Vagina (tissue), 2 donors: ENCODE measurements at regions of chr5 and their contacts with region 1.

Region 1: DNA sequence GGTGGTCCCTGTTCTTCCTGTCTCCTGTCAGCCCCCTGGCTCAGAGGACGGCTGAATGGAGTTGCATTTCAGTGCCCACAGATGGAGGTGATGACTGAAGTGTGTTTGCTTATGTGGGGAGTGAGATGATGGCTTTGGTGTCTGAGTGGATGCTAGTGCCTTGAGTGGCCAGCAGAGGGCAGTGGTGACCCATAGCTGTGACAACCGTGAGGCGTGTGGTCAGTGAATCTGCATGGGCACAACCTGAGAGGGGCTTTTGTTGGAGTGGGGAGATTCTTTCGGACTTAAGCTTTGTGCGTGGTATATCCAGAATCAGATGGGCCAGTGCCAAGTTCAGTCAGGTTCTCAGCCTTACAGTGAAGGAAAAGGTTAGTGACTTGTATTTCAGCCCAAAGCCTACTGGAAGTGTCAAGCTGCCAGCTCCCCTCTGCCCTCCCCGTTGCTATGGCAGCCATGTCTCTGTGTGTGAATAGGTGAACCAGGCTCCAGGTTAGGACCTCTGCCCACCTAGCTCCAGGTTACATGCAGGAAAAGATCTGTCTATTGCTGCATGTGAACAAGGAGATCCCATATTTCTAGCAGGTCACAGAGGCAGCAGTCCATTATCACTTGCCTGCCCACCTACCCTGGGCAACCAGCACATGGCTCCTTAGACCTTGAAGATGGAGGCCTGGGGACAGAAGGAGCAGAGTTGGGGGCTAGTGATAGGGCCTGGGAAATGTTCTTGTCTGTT is 14.7 kb upstream of the CXXC5 start:
- DNase-seq: peak in 1 of 2 donors; percentile 88
- H3K4me3 ChIP-seq: no peak overlapping the region
- H3K27ac ChIP-seq: no peak overlapping the region
- H3K4me1 ChIP-seq: peaks cover 31% of the 10 kb centered on the region
- H3K27me3 ChIP-seq: no peaks in the 10 kb centered on the region
- CTCF ChIP-seq: peak; percentile 93 to 98 (median 98)
- POLR2A ChIP-seq: no peak

Region 2: GRCh38 chr5:139378101-139378835 is 255.2 kb before region 1 on chr5:
- intact Hi-C with region 1: no loop called
- DNase-seq: no peak
- H3K4me3 ChIP-seq: no peak overlapping the region
- H3K27ac ChIP-seq: no peak overlapping the region
- H3K4me1 ChIP-seq: peaks cover 5% of the 10 kb centered on the region
- H3K27me3 ChIP-seq: no peaks in the 10 kb centered on the region
- CTCF ChIP-seq: no peak
- POLR2A ChIP-seq: no peak

Region 3: DNA sequence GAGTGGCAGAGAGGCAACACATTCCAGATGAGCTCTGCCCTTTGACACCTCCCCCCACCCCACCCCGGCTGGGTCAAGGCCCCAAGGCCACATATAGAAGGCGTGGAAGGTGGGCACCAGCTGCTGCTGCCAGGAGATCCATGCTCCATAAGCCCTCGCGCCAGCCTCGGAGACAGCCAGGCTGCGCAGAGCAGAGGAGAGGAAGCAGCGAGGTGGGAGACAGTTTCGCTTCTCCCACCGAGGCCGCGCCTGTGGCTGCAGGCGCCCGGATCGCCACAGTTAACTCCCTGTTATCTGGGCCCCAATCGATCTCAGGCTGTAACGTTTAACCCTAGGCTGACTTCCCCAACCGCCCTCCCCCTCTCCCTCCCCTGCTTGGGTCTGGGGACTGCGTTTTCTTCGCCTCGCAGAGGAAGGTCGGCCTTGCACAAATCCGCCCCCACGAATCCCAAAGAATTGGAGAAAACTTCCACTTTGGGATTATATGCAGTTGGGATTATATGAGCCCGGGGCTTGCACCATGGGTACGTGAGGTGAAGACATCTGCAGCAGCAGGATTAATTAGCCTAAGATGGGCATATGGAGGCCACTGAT is 13.5 kb after region 1 on chr5:
- intact Hi-C with region 1: loop called (anchors 1 kb)
- DNase-seq: no peak
- H3K4me3 ChIP-seq: peak overlapping the region; percentile 12 to 67
- H3K27ac ChIP-seq: peak overlapping the region; percentile 95
- H3K4me1 ChIP-seq: peaks cover 70% of the 10 kb centered on the region
- H3K27me3 ChIP-seq: no peaks in the 10 kb centered on the region
- CTCF ChIP-seq: no peak
- POLR2A ChIP-seq: no peak

Region 4: GRCh38 chr5:139689631-139690063 is 56.2 kb after region 1 on chr5:
- intact Hi-C with region 1: loop called (anchors 5 kb)
- DNase-seq: no peak
- H3K4me3 ChIP-seq: no peak overlapping the region
- H3K27ac ChIP-seq: peak overlapping the region; percentile 85
- H3K4me1 ChIP-seq: peaks cover 48% of the 10 kb centered on the region
- H3K27me3 ChIP-seq: no peaks in the 10 kb centered on the region
- CTCF ChIP-seq: no peak
- POLR2A ChIP-seq: no peak

Region 5: DNA sequence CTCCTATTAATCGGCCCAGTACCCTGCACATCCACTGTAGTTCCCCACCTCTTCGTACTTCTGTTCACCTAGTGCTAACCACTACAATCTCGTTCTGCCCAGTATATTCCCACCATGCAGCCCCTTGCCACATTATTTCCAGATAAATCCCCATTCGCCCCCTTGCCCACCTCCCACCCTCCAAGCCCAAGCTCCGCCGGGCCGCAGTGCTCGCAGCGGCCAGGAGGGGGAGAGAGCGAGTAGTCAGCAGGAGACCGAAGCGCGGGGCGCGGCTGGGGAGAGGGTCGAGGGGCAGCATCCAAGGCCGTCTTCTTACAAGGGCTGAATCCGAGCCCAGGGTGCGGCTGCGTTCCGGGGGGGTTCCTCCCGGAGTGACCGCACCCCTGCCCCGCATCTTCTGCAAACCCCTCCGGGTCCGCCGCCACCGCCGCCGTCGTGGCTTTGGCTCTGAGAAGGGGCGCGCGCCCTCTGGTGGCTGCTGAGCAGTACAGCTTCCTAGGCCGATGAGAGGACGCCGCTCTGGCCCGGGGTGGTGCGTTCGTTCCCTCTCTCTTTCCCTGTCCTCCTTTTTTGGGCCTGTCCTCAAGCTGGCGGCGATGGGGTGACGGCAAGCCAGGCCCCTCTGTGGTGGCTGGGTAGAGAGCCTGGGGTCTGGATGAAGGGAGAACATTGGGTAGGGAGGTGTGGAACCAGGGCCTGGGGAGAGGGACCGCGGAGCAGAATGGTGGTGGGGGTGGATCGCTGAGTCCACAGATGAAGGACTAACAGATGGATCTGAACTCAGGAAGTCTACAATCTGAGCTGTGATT is 132.2 kb after region 1 on chr5:
- intact Hi-C with region 1: loop called (anchors 2 kb)
- DNase-seq: no peak
- H3K4me3 ChIP-seq: peak overlapping the region; percentile 44 to 61
- H3K27ac ChIP-seq: no peak overlapping the region
- H3K4me1 ChIP-seq: peaks cover 9% of the 10 kb centered on the region
- H3K27me3 ChIP-seq: no peaks in the 10 kb centered on the region
- CTCF ChIP-seq: peak; percentile 99 to 100 (median 100)
- POLR2A ChIP-seq: no peak